ENCODE measurements at regions of chr1 and their contacts with region 1.

Region 1: GRCh38 chr1:60765204-60765603 is 317.2 kb upstream of the NFIA start:
- DNase-seq: peak; percentile 12
- CTCF ChIP-seq: peak; percentile 45

Region 2: GRCh38 chr1:60281360-60281932 is 483.8 kb before region 1 on chr1:
- in situ Hi-C with region 1: loop called (anchors 25 kb)
- DNase-seq: peak; percentile 37
- CTCF ChIP-seq: peak; percentile 77

Region 3: GRCh38 chr1:60573726-60574409 is 191.3 kb before region 1 on chr1:
- in situ Hi-C with region 1: no loop called
- DNase-seq: no peak
- CTCF ChIP-seq: no peak

Region 4: DNA sequence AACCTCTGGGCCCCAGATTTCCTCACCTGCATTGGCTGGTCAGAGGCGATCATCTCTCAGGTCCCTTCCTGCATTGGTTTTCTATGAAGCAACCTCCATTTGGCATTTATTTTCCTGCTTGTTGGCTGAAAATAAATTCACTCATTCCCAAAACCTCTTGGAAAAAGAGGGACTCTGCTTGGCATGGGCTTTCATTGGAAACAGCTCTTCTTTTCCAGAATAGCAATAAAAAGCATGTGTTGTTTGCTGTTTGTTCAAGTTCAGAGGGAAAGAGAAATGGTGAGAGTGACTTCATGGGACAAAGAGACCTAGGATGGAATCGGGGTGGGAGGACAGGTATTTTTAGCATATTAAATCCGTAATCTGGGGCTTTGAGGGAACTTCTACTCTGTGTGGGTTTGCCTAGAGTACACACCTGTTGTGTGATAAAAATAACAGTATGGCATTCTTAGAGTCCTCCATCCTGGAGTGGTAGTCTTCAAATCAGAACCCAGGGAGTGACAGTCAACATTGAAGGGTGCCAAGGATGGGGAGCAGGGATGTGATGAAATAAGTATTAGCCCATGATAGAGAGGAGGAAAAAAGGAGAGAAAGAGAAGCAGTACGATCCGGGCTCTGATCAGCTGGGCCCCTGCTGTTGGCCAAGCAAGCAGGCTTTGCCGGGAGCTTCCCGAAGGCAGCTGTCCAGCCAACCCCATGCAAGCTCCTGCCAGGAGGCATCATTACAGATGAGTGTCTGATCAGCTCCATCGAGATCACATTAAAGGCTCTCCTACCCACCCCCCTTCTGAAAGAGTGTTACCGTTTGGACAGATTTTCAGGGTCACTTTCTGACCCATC is 185.2 kb after region 1 on chr1:
- in situ Hi-C with region 1: no loop called
- DNase-seq: no peak
- CTCF ChIP-seq: no peak